ENCODE measurements at regions of chr3 and their contacts with region 1.

Region 1: DNA sequence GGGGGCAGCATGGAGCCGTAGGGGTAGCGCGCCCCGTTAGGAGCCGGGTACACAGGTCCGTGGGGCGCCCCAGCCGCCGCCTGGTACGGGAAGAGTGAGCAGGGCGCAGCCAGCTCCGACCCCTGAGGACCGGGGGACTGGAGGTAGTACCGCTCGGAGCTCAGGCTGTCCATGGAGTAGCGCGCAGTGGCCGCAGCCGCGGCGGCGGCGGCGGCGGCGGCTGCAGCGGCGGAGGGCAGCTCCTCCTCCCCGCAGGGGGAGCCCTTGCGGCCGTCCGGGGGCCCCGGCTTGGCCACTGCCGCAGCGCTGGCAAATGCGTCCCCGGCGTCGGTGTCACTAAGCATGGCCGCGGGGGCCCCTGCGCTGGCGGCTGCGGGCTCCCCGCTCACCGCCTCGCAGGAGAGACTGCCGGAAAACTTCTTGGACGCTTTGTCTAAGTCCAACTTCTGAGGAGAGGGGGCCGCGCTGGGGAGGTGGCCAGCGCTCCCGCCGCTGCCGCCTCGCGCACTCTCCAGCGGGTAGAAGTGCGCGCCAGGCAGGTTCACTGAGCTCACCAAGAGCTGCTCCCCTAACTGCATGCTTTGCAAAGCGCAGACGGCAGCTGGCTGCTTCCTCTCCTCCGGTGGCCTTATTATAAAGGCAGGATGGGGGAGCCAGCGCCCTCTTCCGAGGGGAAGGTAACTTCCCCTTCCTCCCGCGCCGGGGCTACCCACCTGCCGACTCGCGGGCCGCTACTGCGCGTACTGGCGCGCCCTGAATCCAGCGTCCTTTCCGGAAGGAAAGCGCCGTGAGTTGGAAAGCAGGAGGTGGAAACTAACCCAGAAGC is at the start of gene EOMES:
- DNase-seq: peak; percentile 86 to 89
- ATAC-seq: peak; percentile 88 to 92
- H3K4me3 ChIP-seq: peak within 1 kb of the TSS; percentile 58
- H3K27ac ChIP-seq: peak within 1 kb of the TSS; percentile 77 to 94
- H3K4me1 ChIP-seq: peaks cover 4% of the 10 kb centered on the region; the same call in 2 of the 3 replicates
- CTCF ChIP-seq: peak; percentile 86
- EP300 ChIP-seq: no peak
- POLR2A ChIP-seq: peak; percentile 72
- RAD21 ChIP-seq: peak; percentile 48 to 85; a peak in 4 of 5 replicates
- polyA plus RNA-seq, gene EOMES: 1.2 and 1.6 TPM in 2 replicates

Region 2: DNA sequence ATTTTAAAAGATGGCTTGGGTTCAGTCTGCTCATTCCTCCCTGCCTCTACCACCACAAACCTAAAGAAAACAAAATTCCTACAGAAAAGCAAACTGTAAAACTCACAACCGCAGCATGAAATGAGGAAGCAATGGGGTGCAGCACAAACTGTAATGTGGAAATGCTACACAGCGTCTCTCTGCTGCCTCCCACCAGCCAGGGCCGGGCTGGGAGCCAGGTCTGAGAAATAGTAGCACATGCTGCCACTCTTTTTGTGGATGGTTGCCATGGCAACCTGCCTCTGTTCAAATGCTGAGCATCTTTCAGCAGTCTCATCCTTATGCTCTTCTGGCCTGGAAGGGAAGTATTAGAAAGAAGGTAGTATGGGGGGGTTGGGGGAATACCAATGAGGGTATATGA is 55.2 kb before region 1 on chr3:
- CTCF ChIA-PET with region 1: no interaction called
- POLR2A ChIA-PET with region 1: no interaction called
- DNase-seq: peak in 1 of 2 experiments; percentile 25
- ATAC-seq: peak; percentile 47 to 54; a peak in 3 of 6 replicates
- H3K4me3 ChIP-seq: no peak overlapping the region
- H3K27ac ChIP-seq: peak overlapping the region in 1 of 2 experiments; percentile 30; a peak in 1 of 6 replicates
- H3K4me1 ChIP-seq: 0 out of 3 replicates have a peak, but pooled peaks cover 2% of the 10 kb centered on the region
- CTCF ChIP-seq: no peak
- EP300 ChIP-seq: no peak
- POLR2A ChIP-seq: no peak
- RAD21 ChIP-seq: no peak

Region 3: DNA sequence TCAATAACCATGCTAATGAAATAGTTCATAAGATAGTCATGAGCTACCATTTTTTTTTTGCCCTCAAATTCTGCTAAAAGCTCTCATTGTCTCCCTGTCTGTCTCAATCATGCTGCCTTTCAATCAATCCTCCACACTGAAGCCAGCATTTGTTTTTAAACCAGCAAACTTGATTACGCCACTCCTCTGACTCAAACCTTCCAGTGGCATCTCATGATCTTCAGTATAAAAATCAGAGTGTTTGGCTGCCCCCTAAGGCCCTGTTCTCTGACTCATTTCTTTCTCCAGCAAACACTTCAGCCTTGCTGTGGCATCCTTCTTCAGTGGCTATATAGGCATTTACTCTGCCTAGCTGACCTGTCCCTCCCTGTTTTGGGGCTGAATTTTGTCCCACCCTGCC is 36.2 kb after region 1 on chr3:
- CTCF ChIA-PET with region 1: interaction called, 36 read pairs
- POLR2A ChIA-PET with region 1: no interaction called
- DNase-seq: peak; percentile 48 to 62
- ATAC-seq: peak; percentile 94 to 98
- H3K4me3 ChIP-seq: no peak overlapping the region
- H3K27ac ChIP-seq: peak overlapping the region in 1 of 2 experiments; percentile 49; a peak in 2 of 6 replicates
- H3K4me1 ChIP-seq: peaks cover 20% of the 10 kb centered on the region; the same call in 2 of the 3 replicates
- CTCF ChIP-seq: 0 out of 3 replicates have a peak, but pooled peaks have one; percentile 9
- EP300 ChIP-seq: no peak
- POLR2A ChIP-seq: no peak
- RAD21 ChIP-seq: 0 out of 5 replicates have a peak, but pooled peaks of 1 of the 2 experiments have one; percentile 23

Region 4: GRCh38 chr3:28286595-28286994 is 564.7 kb after region 1 on chr3:
- CTCF ChIA-PET with region 1: interaction called, 47 read pairs
- POLR2A ChIA-PET with region 1: interaction called, 11 read pairs
- DNase-seq: peak; percentile 15 to 51
- ATAC-seq: peak; percentile 90 to 93; a peak in 5 of 6 replicates
- H3K4me3 ChIP-seq: no peak overlapping the region
- H3K27ac ChIP-seq: no peak overlapping the region
- H3K4me1 ChIP-seq: no peaks in the 10 kb centered on the region; the same call in 2 of the 3 replicates
- CTCF ChIP-seq: peak; percentile 62
- EP300 ChIP-seq: no peak
- POLR2A ChIP-seq: no peak
- RAD21 ChIP-seq: peak; percentile 65 to 68

Region 5: GRCh38 chr3:28322464-28322863 is 600.5 kb after region 1 on chr3:
- CTCF ChIA-PET with region 1: interaction called, 71 read pairs
- POLR2A ChIA-PET with region 1: interaction called, 5 read pairs
- DNase-seq: no peak
- ATAC-seq: no peak
- H3K4me3 ChIP-seq: no peak overlapping the region
- H3K27ac ChIP-seq: no peak overlapping the region
- H3K4me1 ChIP-seq: no peaks in the 10 kb centered on the region
- CTCF ChIP-seq: no peak
- EP300 ChIP-seq: no peak
- POLR2A ChIP-seq: no peak
- RAD21 ChIP-seq: no peak

Region 6: DNA sequence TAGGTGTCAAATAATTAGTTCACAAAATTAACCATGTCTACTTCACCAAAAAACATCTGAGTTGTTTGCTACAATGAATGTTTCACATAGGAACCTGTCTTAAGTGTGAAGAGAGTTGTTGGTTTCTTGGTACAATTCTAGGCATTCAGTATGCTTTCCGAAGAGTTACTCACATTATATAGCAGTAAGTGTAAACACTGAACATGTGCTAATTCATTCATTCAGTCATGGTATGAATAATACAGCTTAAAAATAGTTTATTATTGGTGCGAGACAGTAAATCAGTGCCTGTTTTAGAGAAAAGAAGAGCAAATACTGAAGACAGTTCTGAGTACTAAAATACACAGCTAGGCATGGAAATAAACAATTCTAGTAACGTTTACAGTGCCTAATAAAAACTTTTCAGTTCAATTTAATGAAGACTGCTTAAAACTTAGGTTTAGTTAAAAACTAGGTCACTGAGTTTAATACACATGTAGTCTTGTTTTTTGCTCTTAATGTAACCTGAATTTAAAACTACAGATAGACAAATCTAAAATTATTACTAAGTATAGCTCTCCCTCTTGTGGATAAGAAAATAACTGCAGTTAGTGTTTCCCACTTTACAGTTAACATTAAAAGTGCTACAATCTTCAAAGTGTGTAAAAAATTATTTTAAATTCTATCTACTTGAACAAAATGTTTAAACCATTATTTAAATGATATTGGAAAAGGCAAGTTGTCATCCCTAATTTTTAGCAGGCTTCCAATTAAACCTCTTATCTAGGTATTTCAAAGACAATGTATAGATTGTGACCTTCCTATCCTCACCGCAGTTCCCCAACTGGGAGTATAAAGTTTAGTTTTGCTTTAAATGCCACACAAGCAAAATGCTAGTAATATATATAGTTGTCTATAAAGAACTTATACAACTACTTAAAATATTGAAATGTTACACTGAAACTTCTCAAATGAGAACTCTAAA is 606.5 kb after region 1 on chr3:
- CTCF ChIA-PET with region 1: interaction called, 71 read pairs
- POLR2A ChIA-PET with region 1: interaction called, 5 read pairs
- DNase-seq: peak in 1 of 2 experiments; percentile 16
- ATAC-seq: peak in 1 of 2 experiments; percentile 67; a peak in 3 of 6 replicates
- H3K4me3 ChIP-seq: no peak overlapping the region
- H3K27ac ChIP-seq: no peak overlapping the region
- H3K4me1 ChIP-seq: no peaks in the 10 kb centered on the region
- CTCF ChIP-seq: peak; percentile 69
- EP300 ChIP-seq: no peak
- POLR2A ChIP-seq: no peak
- RAD21 ChIP-seq: peak; percentile 65 to 71

Region 7: GRCh38 chr3:28334552-28334951 is 612.6 kb after region 1 on chr3:
- CTCF ChIA-PET with region 1: interaction called, 71 read pairs
- POLR2A ChIA-PET with region 1: no interaction called
- DNase-seq: no peak
- ATAC-seq: no peak
- H3K4me3 ChIP-seq: no peak overlapping the region
- H3K27ac ChIP-seq: no peak overlapping the region
- H3K4me1 ChIP-seq: no peaks in the 10 kb centered on the region
- CTCF ChIP-seq: peak; percentile 37; the same call in 2 of the 3 replicates
- EP300 ChIP-seq: no peak
- POLR2A ChIP-seq: no peak
- RAD21 ChIP-seq: peak; percentile 27 to 28; a peak in 3 of 5 replicates

Region 8: GRCh38 chr3:28348629-28349483 is 626.9 kb after region 1 on chr3 and contains the starts of genes AZI2 and ZCWPW2:
- CTCF ChIA-PET with region 1: interaction called, 7 read pairs
- POLR2A ChIA-PET with region 1: interaction called, 10 read pairs
- DNase-seq: peak; percentile 60 to 97
- ATAC-seq: peak; percentile 91 to 96
- H3K4me3 ChIP-seq: peak within 1 kb of the TSS; percentile 67
- H3K27ac ChIP-seq: peak within 1 kb of the TSS; percentile 97 to 98
- H3K4me1 ChIP-seq: peaks cover 26% of the 10 kb centered on the region
- CTCF ChIP-seq: peak; percentile 29; the same call in 1 of the 3 replicates
- EP300 ChIP-seq: no peak
- POLR2A ChIP-seq: peak; percentile 48
- RAD21 ChIP-seq: no peak
- polyA plus RNA-seq, gene AZI2: 86.4 and 99.4 TPM in 2 replicates
- polyA plus RNA-seq, gene ZCWPW2: 0.21 and 0.34 TPM in 2 replicates